Adrenal gland (tissue), 19 donors: ENCODE measurements at regions of chr9 and their contacts with region 1.

Region 1: DNA sequence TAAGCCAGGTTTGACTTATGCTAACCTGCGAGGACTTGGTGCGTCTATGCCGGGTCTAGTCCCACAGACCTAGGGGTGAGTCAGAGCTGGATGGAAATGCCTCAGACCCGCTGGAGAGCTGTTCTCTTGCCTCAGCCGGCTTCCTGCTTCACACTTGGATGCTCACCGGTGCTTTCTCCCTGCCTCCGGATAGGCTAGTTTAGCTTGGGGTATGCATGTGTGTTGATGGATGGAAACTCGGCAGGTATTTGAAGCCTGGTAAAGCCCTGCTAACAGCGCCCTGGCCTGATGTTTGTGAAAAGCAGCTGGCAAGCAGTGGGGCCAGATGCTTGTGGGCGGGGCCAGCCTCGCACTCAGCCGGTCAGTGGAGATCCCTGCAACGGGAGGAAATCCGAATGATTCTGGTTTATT is 29.3 kb downstream of the PRRC2B start:
- DNase-seq: peak; percentile 55 to 86 (median 80)
- H3K4me3 ChIP-seq: no peak overlapping the region
- H3K27ac ChIP-seq: peak overlapping the region; percentile 1 to 87 (median 80)
- H3K4me1 ChIP-seq: peaks cover 47 to 58% of the 10 kb centered on the region in 2 donors
- H3K27me3 ChIP-seq: no peaks in the 10 kb centered on the region
- CTCF ChIP-seq: no peak
- POLR2A ChIP-seq: no peak

Region 2: DNA sequence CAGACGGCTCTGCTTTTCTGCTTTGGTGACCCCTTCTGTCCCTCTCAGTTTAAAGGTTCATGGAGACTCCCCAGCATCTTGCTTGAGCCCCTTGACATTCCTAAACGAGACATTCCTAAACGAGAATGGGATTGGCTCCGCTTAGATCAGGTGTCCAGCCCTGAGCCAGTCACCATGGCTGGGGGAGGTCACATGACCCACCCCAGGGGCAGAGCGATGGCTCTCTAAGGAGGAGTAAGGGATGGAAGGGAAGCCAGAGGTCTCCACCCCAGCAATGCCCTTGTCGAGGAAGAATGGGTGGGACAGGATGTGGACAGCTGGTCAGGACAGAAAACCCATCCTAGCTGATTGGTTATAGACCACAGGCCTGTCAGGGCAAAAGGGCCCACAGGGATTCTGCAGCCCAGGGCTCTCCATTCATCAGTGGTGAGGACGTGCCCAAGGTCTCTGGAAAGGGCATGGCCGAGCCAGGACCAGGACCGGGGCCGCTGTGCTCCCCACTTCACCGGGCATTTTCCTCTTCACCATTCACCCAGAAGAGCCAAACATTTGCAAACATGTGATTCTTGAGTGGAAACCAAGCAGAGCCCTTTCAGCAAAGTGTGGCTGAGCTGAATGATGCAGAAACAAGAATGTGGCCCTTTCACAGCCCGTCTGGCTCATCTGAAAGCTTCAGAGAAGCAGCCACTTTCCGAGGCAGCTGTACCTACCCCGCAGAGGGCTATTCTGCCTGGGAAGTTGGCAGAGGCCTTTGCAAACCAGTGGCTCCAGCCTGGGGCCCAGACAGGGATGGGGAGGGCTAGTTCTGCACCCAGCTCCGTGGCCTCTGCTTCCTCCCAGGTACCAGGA is 346.6 kb before region 1 on chr9:
- intact Hi-C with region 1: no loop called
- DNase-seq: no peak
- H3K4me3 ChIP-seq: no peak overlapping the region
- H3K27ac ChIP-seq: no peak overlapping the region
- H3K4me1 ChIP-seq: no peaks in the 10 kb centered on the region
- H3K27me3 ChIP-seq: no peaks in the 10 kb centered on the region
- CTCF ChIP-seq: no peak
- POLR2A ChIP-seq: no peak

Region 3: DNA sequence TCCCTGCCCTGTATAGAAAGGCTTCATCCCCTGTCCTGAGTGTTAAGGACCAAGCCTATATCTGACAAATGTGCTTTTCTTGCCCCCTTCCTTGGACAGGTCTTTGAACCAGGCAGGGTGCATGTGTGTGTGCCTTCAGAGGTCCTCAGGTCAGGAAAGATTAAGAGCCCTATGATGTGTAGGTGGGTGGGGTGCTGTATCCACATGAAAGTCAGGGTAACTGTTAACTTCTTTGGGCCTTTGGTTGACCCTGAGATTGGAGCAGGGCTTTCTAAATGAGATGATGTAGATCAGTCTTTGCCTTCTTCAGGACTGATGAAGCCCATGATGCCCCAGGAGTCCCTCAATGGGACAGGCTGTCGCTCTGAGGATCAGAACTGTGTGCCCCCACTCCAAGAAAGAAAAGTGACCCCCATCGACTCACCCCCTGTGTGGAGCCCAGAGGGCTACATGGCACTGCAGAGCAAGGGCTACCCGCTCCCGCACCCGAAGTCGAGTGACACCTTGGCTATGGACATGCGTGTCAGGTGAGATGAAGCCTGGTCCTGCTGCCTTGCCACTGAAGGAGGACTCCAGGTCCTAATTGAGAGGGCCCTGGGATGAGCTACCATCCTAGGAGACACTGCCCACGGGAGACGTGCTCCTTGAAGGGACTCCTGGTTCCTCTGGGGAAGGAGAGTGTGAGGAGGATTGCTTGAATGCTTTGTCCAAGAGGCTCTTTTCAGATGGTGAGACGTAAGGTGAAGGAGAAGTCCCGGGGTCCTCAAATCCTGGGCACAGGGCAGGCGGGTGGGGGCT is 50.2 kb after region 1 on chr9:
- intact Hi-C with region 1: loop called in 1 of 2 experiments (anchors 5 kb)
- DNase-seq: peak in 1 of 7 donors; percentile 5
- H3K4me3 ChIP-seq: no peak overlapping the region
- H3K27ac ChIP-seq: no peak overlapping the region
- H3K4me1 ChIP-seq: peaks cover 0 to 14% of the 10 kb centered on the region in 2 donors
- H3K27me3 ChIP-seq: no peaks in the 10 kb centered on the region
- CTCF ChIP-seq: no peak
- POLR2A ChIP-seq: no peak